ENCODE measurements at regions of chr17 and their contacts with region 1.

Region 1: GRCh38 chr17:76278952-76279741 is 14.0 kb downstream of the UBALD2 start:
- DNase-seq: peak; percentile 78 to 92
- ATAC-seq: peak; percentile 87

Region 2: DNA sequence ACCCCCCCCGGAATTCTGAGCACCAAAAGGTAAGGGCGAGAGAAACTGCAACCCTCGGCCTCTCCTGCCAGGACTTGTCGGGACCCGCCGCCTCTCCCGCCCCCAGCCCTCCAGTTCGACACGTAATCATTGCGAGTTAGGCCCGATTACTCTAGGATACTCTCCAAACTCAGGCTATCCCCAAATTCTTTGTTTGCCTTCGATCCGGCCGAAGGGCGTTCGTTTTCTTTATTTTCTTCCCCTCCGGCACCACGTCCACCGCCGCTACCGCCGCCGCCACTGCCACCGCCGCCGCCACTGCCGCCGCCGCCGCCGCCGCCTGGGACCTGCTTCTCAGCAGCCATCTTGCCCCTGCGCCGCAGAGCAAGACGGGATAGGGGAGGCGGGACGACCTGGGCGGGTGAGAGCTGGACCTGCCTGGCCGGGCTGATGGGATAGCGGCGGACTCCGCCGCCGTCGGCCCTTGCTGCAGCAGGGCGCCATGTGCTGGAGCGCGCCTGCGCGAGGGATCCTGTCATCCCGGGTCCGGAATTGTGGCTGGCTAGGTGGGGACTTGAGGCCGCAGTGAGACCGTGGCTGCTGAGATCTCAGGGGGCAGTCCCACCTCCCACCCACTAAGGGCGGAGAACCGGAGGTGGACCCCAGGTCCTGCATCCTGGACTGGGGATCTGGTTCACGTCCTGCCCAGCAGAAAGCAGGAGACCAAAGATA is 206.8 kb before region 1 on chr17 and contains the start of gene SRP68:
- intact Hi-C with region 1: no loop called
- DNase-seq: peak; percentile 92 to 94
- ATAC-seq: peak; percentile 98
- total RNA-seq, gene SRP68: 49.9 to 56.5 TPM

Region 3: GRCh38 chr17:76182016-76182764 is 97.0 kb before region 1 on chr17:
- intact Hi-C with region 1: loop called in 1 of 2 experiments (anchors 5 kb)
- DNase-seq: peak; percentile 82 to 94
- ATAC-seq: peak; percentile 93